A673 (cell line): ENCODE measurements at regions of chr4 and their contacts with region 1.

Region 1: DNA sequence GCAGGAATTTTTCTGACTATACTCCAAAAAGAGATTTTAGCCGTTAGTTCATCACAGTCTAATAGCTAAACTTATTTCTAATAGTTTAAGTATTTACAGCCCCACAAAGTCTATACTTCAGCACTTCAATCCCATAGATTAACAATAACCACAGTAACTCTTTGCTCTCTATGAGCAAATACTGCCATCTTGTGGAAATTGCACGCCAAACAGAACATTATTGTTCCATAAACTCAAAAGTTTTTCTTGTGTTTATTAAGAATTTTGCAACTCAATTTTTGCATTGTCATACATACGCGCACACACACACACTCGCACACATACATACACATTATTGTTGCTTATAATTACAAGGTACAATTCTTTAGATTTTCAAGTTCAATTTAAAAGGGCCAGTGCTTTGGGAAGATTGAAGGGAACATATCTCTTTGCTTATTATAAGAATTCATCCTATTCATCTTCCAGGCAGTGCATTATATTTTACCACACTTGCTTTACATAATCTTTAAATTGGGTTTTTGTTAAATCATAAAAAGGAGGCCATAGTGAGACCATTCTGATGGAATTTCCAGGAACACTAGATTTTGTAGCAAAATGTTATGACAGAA is 63.8 kb upstream of the ATOH1 start:
- DNase-seq: peak; percentile 44
- H3K4me3 ChIP-seq: no peak overlapping the region
- H3K27ac ChIP-seq: no peak overlapping the region
- H3K4me1 ChIP-seq: no peaks in the 10 kb centered on the region
- H3K27me3 ChIP-seq: no peaks in the 10 kb centered on the region
- CTCF ChIP-seq: peak; percentile 62

Region 2: DNA sequence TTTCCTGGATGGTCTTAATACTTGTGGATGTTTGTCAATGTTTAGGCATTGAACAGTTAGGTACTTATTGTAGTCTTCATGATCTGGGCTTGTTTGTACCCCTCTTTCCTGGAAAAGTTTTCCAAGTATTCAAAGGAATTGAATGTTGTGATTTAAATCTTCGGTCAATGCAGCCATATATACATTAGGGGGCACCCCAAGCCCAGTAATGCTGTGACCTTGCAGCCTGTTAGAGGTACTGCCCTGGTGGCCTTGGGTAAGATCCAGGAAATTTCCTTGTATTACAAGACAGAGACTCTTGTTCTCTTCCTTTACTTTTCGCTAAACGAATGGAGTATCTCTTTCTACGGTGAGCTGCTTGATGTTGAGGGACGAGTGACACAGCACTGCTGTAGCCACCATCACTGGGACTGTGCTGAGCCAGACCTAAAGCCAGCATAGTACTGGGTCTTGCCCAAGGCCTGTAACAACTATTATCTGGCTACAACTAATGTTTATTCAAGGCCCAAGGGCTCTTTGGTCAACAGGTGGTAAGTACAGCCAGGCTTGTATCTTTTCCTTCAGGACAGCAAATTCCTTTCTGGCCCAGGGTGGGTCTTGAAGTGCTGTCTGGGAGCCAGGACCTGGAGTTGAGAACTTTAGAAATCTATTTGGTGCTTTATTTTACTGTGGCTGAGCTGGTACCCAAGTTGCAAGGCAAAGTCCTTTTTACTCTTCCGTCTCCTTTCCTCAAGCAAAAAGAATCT is 54.5 kb before region 1 on chr4:
- CTCF ChIA-PET with region 1: no interaction called
- POLR2A ChIA-PET with region 1: no interaction called
- intact Hi-C with region 1: loop called (anchors 5 kb)
- DNase-seq: peak; percentile 29
- H3K4me3 ChIP-seq: no peak overlapping the region
- H3K27ac ChIP-seq: no peak overlapping the region
- H3K4me1 ChIP-seq: no peaks in the 10 kb centered on the region
- H3K27me3 ChIP-seq: no peaks in the 10 kb centered on the region
- CTCF ChIP-seq: peak; percentile 43